ENCODE measurements at regions of chr4 and their contacts with region 1.

Region 1: DNA sequence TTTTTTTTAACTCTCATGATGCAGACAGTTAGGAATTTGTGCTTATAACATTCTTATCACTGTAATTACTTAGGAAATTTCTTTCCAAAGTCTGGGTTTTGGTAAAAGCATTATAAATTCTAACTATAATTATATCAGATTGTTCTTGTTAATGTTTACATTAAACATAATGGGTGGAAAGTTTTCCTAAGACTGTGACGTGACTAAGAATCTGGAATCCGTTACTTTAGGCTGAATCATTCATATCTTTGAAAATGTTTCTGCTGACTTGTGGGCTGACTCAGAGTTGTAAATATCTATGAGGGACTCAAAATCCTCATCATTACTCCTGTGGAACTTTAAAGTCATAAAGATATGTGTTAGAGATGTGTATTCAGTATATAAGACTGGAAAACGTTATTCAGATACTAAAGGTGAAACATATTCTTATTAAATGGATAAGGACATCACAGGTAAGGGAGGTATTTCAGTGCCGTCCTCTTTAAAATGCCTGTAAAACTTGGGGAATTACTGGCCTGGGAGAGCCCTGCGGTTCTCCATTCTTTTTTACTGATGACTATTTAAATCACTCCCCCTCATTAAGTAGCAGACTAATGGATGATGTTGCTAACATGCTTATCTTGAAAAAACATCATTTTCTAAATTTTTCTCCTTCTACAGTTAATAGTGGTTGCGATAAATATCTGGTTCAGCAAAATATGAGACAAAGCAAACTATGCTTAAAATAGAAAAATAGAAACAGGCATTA is 159.0 kb downstream of the DCLK2 start:
- DNase-seq: peak in 1 of 5 donors; percentile 57
- H3K4me3 ChIP-seq: no peak overlapping the region
- H3K27ac ChIP-seq: no peak overlapping the region
- H3K4me1 ChIP-seq: peaks cover 0 to 3% (median 0%) of the 10 kb centered on the region in 3 donors
- H3K27me3 ChIP-seq: no peaks in the 10 kb centered on the region
- CTCF ChIP-seq: no peak

Region 2: DNA sequence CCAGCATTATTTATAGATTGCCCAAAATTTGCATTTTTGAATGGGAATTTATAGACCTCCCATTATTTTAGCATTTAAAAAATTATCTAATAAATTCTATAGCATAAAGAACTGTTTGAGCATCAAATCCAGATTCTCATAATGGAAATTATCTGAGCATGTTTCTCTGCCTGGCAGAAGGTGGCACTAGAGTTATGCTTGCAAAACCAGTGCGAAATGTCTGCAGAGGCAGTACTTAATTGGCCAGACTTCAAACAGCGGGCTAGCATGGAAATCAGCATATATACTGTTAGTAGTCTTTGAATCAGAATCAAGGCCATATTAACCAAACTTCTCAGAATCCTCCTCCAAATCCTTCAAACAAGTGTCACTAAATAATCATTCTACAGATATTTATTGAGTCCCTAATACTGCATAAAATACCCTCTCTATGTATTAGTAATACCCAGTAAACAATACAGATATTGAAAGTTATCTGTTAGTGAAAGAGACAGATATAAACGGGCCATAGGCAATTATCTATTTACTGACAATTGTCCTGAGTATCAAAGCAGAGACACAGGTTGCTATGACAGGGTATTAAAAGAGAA is 237.7 kb before region 1 on chr4:
- intact Hi-C with region 1: loop called (anchors 10 kb)
- DNase-seq: peak in 3 of 5 donors; percentile 24 to 85 (median 57)
- H3K4me3 ChIP-seq: no peak overlapping the region
- H3K27ac ChIP-seq: no peak overlapping the region
- H3K4me1 ChIP-seq: no peaks in the 10 kb centered on the region
- H3K27me3 ChIP-seq: no peaks in the 10 kb centered on the region
- CTCF ChIP-seq: peak; percentile 72

Region 3: GRCh38 chr4:150789864-150790263 is 552.6 kb after region 1 on chr4:
- intact Hi-C with region 1: no loop called
- DNase-seq: no peak
- H3K4me3 ChIP-seq: no peak overlapping the region
- H3K27ac ChIP-seq: no peak overlapping the region
- H3K4me1 ChIP-seq: no peaks in the 10 kb centered on the region
- H3K27me3 ChIP-seq: no peaks in the 10 kb centered on the region
- CTCF ChIP-seq: no peak